Sciatic nerve (tissue), 2 donors: ENCODE measurements at regions of chr4 and their contacts with region 1.

Region 1: DNA sequence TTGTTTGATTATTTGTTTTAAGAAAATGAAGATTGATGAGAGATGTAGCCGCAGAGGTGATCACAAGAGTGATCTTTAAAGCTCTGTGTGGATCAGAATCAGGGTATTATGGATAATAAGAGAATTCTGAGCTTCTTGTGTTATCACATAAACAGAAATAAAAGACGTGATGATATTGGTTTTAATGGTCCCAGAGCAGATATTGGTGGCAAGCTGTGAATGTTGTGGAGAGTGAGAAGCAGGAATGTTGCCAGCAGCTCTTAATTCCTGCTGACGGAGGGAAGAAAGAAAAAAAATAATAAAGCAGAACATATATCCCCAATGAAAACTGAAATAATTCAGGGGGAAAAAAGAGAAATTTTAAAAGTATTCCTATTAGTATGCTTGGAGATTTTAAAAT is 1015.9 kb downstream of the PCDH18 start:
- DNase-seq: no peak
- ATAC-seq: no peak

Region 2: DNA sequence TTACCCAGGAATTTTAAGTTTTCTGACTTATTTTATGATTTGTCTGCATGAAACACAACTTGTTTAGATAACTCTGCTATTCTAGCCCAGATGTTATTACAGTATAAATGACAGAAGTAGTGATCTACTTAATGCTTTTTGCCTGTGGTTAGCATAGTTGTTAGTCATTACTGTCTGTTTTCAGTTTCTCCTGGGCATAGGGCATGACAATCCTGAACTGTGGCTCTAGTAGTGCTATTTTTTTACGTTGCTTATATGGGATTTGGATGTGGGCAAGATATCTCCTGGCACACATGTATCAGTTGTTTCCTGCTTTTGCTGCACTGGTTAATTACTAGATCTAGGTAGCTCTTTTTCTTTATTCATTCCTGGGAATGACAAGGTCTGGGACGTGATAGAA is 10.1 kb after region 1 on chr4:
- intact Hi-C with region 1: loop called (anchors 1 kb)
- DNase-seq: no peak
- ATAC-seq: no peak